CD4-positive, alpha-beta memory T cell (primary cell): ENCODE measurements at regions of chr1 and their contacts with region 1.

Region 1: GRCh38 chr1:154479764-154480421 is 22.1 kb upstream of the TDRD10 start:
- DNase-seq: peak in 4 of 5 donors; percentile 62 to 77 (median 66)
- H3K4me3 ChIP-seq: no peak overlapping the region
- H3K4me3 Mint-ChIP-seq: no peak overlapping the region
- H3K27ac ChIP-seq: no peak overlapping the region
- H3K27ac Mint-ChIP-seq: peak overlapping the region in 1 of 7 donors; percentile 9
- H3K4me1 ChIP-seq: peaks cover 16% of the 10 kb centered on the region
- H3K4me1 Mint-ChIP-seq: peaks cover 8 to 17% (median 12%) of the 10 kb centered on the region in 4 donors
- H3K27me3 ChIP-seq: no peaks in the 10 kb centered on the region
- H3K27me3 Mint-ChIP-seq: peaks cover 0 to 2% of the 10 kb centered on the region in 2 donors

Region 2: DNA sequence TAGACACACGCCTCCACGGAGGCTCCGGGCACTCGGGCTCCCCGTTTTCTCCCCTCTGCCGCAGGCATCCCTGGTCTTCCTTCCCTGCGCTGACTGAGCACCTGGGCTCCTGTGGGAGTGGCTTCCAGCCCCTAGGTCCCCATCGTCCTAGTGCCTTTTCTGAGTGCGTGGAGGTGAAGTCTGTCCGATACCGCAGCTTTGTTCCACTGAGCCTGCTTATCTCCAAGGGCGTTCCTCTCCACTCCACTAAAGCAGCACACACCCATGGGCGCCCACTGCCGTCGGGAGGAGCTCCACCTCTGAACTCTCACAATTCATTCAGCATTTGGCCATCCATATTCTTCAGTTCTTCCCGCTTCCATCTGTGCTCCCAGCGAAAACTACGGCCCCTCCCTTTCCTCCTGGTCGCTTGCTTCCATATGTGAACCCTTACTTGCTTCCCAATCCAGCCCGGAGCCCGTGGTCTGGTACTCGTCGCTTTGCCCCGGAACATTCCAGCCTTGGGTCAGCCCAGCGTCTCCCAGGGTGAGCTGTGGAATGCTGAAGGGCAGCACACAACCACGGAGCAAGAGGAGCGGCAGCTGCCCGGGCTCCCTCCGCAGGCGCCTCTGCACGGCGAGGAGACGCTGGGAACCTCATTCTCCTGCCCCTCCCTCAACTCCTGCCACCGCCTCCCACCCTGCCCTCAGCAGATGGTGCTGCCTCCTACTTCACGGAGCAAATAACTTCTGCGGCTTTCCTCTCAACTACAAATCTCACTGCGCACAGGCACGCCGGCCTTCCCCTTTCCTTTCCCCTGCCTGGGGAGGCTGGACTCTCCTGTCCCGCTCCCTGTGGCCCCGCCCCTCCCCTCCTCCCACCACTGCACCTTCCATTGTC is 127.1 kb before region 1 on chr1:
- CTCF ChIA-PET with region 1: interaction called, 5 read pairs
- POLR2A ChIA-PET with region 1: no interaction called
- intact Hi-C with region 1: loop called (anchors 1 kb)
- DNase-seq: peak; percentile 44 to 68 (median 48)
- H3K4me3 ChIP-seq: peak overlapping the region; percentile 69 to 77
- H3K4me3 Mint-ChIP-seq: peak overlapping the region; percentile 84 to 95 (median 92)
- H3K27ac ChIP-seq: peak overlapping the region; percentile 51
- H3K27ac Mint-ChIP-seq: peak overlapping the region; percentile 38 to 96 (median 90)
- H3K4me1 ChIP-seq: peaks cover 54% of the 10 kb centered on the region
- H3K4me1 Mint-ChIP-seq: peaks cover 30 to 61% (median 44%) of the 10 kb centered on the region in 4 donors
- H3K27me3 ChIP-seq: no peaks in the 10 kb centered on the region
- H3K27me3 Mint-ChIP-seq: no peaks in the 10 kb centered on the region

Region 3: DNA sequence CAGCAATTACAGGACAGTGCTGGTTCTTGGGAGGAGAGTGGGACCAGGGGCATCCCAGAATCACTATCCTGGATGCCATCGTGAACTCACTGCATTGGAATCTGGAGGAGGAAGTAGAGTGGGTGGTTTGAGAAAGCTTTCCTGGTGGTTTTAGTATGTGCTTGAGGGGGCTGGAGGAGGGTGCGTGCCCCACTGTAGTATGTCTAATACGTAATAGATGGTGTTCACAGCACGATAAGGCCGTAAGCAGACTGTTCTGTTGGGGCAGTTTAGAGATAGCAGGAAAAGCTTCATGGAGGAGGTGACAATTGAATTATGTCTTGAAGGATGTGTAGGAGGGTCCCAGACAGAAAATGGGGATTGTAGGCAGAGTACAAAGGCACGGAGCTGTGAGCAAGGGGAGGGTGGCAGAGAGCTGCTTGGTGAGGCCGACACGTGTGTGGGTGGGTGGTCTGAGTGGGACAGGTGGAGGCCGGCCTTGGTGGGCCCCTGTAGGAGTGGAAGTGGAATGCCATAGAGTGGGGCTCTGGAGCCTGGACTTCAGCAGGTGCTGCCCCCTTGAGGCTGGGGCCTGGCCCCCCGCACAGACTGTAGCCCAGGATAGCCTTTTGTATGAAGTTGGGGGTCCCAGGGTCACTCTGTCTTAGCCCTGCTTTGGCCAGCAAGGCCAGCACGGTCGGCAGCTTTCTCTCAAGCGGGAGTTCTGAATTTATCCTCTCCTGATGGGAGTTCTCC is 37.7 kb before region 1 on chr1:
- CTCF ChIA-PET with region 1: no interaction called
- POLR2A ChIA-PET with region 1: no interaction called
- intact Hi-C with region 1: loop called (anchors 2 kb)
- DNase-seq: no peak
- H3K4me3 ChIP-seq: no peak overlapping the region
- H3K4me3 Mint-ChIP-seq: peak overlapping the region; percentile 32 to 87 (median 76)
- H3K27ac ChIP-seq: peak overlapping the region; percentile 47
- H3K27ac Mint-ChIP-seq: peak overlapping the region; percentile 81 to 99 (median 94)
- H3K4me1 ChIP-seq: peaks cover 69% of the 10 kb centered on the region
- H3K4me1 Mint-ChIP-seq: peaks cover 47 to 75% (median 64%) of the 10 kb centered on the region in 4 donors
- H3K27me3 ChIP-seq: no peaks in the 10 kb centered on the region
- H3K27me3 Mint-ChIP-seq: no peaks in the 10 kb centered on the region

Region 4: GRCh38 chr1:154546264-154547063 is 66.6 kb after region 1 on chr1:
- CTCF ChIA-PET with region 1: interaction called, 104 read pairs
- POLR2A ChIA-PET with region 1: interaction called, 6 read pairs
- intact Hi-C with region 1: loop called (anchors 1 kb)
- DNase-seq: peak; percentile 36 to 53 (median 47)
- H3K4me3 ChIP-seq: no peak overlapping the region
- H3K4me3 Mint-ChIP-seq: no peak overlapping the region
- H3K27ac ChIP-seq: no peak overlapping the region
- H3K27ac Mint-ChIP-seq: peak overlapping the region in 4 of 7 donors; percentile 25 to 67 (median 43)
- H3K4me1 ChIP-seq: peaks cover 13% of the 10 kb centered on the region
- H3K4me1 Mint-ChIP-seq: peaks cover 7 to 21% (median 13%) of the 10 kb centered on the region in 4 donors
- H3K27me3 ChIP-seq: no peaks in the 10 kb centered on the region
- H3K27me3 Mint-ChIP-seq: no peaks in the 10 kb centered on the region

Region 5: DNA sequence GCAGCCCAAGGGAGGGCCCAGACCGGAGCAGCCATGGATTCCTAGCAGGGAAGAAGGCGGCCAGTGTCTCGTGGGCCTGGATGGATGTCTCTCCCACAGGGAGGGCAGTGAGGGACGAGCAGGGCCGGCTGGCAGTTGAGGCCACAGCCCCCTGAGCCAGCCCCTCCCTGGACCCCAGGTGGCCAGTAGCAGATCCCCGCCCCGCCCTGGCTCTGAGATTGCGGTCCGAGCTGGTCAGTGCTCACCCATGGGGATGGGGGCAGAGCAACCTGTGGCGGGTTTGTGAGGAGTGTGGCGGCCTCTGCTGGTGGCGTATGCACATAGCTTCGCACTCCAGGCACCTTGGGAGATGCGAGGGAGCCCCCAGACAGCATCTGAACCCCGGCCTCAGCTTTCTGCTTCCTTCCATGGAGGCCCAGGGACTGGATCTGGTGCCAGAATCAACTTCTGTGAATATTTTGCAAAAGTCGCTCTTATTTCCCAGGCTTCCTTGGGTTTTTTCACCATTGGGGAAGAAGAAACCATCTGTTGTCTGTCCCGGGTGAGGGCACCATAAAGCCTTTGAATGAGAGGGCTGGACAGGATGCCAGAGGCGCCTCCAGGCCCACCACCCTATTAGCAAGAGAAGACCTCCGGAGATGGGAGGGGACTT is 398.6 kb after region 1 on chr1:
- CTCF ChIA-PET with region 1: interaction called, 5 read pairs
- POLR2A ChIA-PET with region 1: no interaction called
- intact Hi-C with region 1: loop called (anchors 1 kb)
- DNase-seq: peak; percentile 58 to 68 (median 62)
- H3K4me3 ChIP-seq: no peak overlapping the region
- H3K4me3 Mint-ChIP-seq: no peak overlapping the region
- H3K27ac ChIP-seq: no peak overlapping the region
- H3K27ac Mint-ChIP-seq: no peak overlapping the region
- H3K4me1 ChIP-seq: no peaks in the 10 kb centered on the region
- H3K4me1 Mint-ChIP-seq: peaks cover 0 to 1% (median 0%) of the 10 kb centered on the region in 4 donors
- H3K27me3 ChIP-seq: no peaks in the 10 kb centered on the region
- H3K27me3 Mint-ChIP-seq: peaks cover 3 to 5% of the 10 kb centered on the region in 2 donors

Region 6: DNA sequence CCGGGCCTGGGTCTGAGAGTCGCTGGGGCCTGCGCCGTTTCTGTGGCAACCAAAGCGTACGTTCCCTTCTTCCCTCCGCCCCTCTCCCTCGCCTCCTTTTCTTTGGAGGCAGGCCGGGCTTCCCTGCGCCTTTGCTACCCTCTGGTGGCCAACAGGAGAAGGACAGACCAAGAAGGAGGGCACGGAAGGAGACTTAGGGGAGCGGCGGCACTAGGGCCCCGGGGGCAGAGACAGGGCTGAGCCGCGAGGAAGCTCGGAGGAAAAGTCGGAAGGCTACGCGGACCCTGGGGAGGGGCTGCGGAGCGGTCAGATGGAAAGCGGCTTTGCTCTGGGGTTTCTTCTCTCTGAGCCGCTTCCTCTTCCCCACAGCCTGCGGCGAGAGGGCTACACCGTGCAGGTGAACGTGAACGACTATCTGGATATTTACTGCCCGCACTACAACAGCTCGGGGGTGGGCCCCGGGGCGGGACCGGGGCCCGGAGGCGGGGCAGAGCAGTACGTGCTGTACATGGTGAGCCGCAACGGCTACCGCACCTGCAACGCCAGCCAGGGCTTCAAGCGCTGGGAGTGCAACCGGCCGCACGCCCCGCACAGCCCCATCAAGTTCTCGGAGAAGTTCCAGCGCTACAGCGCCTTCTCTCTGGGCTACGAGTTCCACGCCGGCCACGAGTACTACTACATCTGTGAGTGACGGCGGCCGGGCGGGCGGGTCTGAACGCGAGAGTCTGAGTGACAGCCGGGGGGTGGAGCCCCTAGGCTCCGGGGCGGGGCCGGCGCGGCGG is 605.0 kb after region 1 on chr1:
- CTCF ChIA-PET with region 1: interaction called, 8 read pairs
- POLR2A ChIA-PET with region 1: no interaction called
- intact Hi-C with region 1: loop called (anchors 5 kb)
- DNase-seq: peak; percentile 92 to 96 (median 92)
- H3K4me3 ChIP-seq: peak overlapping the region; percentile 80 to 95
- H3K4me3 Mint-ChIP-seq: peak overlapping the region; percentile 91 to 98 (median 94)
- H3K27ac ChIP-seq: peak overlapping the region; percentile 54
- H3K27ac Mint-ChIP-seq: peak overlapping the region; percentile 88 to 98 (median 94)
- H3K4me1 ChIP-seq: peaks cover 57% of the 10 kb centered on the region
- H3K4me1 Mint-ChIP-seq: peaks cover 22 to 44% (median 34%) of the 10 kb centered on the region in 4 donors
- H3K27me3 ChIP-seq: peaks cover 34% of the 10 kb centered on the region
- H3K27me3 Mint-ChIP-seq: peaks cover 13 to 30% of the 10 kb centered on the region in 2 donors